ENCODE measurements at regions of chr3 and their contacts with region 1.

Region 1: DNA sequence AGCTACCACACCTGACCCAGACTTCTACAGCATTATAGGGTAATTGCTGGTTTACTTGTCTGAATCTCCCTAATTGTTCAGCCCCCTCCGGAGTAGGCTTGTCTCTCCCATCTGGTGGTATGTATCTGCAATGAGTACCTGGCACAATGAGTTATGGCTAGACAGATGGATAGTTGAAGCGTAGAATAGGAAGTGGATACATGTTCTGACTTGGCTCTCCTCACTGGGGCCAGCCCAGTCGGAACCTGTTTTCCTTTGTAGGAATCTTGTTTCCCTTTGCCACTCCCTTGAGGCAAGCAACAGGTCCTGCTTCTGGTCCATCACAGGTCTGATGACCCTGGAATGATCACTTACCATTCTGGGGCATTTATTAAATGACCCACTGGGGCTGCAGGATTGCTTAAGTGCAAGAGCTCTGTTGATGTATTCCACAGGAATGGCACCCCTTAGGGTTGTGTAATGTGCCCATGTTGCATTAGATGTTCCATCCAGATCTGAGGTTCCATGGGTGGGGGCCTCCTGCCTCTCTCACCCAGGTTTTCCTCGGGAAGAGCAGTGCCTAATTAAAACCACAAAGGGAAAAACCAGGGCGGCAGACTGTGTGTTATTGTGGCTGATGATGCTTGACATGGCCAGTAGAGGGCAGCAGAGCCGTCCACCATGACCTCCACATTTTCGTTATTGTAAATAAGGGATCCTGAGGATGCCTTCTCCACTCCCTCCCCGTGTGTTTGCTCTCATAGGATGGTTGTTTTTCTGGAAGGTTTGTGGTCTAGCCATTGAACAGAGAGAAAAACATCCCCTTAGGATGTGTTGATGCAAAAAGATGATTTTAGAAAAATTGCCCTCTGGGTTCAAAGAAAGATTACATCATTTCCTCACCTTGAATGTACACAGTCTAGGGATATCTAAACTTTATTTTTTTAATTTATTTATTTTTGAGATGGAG is 58.0 kb downstream of the CMTM8 start:
- DNase-seq: peak; percentile 61 to 73 (median 68)
- H3K4me3 ChIP-seq: no peak overlapping the region
- H3K4me3 Mint-ChIP-seq: peak overlapping the region; percentile 49 to 86 (median 71)
- H3K27ac ChIP-seq: peak overlapping the region; percentile 63
- H3K27ac Mint-ChIP-seq: peak overlapping the region; percentile 81 to 97 (median 93)
- H3K4me1 ChIP-seq: peaks cover 52% of the 10 kb centered on the region
- H3K4me1 Mint-ChIP-seq: peaks cover 34 to 65% (median 48%) of the 10 kb centered on the region in 4 donors
- H3K27me3 ChIP-seq: no peaks in the 10 kb centered on the region
- H3K27me3 Mint-ChIP-seq: no peaks in the 10 kb centered on the region

Region 2: GRCh38 chr3:32238453-32239306 is 57.9 kb before region 1 on chr3 and contains the start of gene CMTM8:
- CTCF ChIA-PET with region 1: interaction called, 57 read pairs
- POLR2A ChIA-PET with region 1: interaction called, 10 read pairs
- intact Hi-C with region 1: no loop called
- DNase-seq: peak; percentile 65 to 72 (median 67)
- H3K4me3 ChIP-seq: peak within 1 kb of the TSS; percentile 58 to 63
- H3K4me3 Mint-ChIP-seq: peak within 1 kb of the TSS; percentile 87 to 93 (median 90)
- H3K27ac ChIP-seq: peak within 1 kb of the TSS; percentile 57
- H3K27ac Mint-ChIP-seq: peak within 1 kb of the TSS; percentile 41 to 91 (median 66)
- H3K4me1 ChIP-seq: peaks cover 35% of the 10 kb centered on the region
- H3K4me1 Mint-ChIP-seq: peaks cover 28 to 50% (median 41%) of the 10 kb centered on the region in 4 donors
- H3K27me3 ChIP-seq: no peaks in the 10 kb centered on the region
- H3K27me3 Mint-ChIP-seq: no peaks in the 10 kb centered on the region
- total RNA-seq, gene CMTM8: 16.8 to 17.8 TPM

Region 3: DNA sequence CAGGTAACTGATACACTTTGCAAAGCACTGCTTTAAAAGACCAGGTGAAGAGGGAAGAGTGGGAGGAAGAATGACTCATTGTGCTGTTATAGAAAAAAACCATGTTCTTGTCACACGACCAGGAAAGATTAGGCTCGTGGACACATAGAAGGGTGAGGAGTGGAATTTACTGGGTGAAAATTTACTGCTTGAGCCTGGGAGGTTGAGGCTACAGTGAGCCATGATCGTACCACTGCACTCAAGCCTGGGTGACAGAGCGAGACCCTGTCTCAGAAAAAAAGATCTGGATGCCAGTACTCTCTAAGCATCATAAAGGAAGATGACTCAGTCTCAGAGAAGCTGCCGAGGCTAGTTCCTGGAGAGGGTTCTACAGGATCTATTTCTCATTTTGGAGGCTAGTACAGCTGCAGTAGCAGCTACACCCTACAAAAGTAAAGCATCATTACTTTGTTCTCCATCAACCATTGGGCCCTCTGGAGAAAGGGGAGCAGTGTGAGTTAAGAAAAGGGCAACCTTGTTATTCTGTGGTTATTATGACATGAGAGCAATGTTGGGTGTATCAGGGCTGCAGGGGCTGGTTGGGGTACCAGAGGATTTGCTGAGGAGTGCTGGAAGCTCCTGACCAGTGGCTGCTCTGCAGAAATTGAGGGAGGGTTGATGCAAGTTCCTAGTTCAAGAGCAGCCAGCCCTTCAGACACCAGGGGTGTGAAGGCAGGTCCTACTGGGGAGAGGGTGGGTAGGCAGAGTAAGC is 17.4 kb after region 1 on chr3:
- CTCF ChIA-PET with region 1: interaction called, 77 read pairs
- POLR2A ChIA-PET with region 1: interaction called, 50 read pairs
- intact Hi-C with region 1: loop called (anchors 2 kb)
- DNase-seq: peak in 1 of 5 donors; percentile 47
- H3K4me3 ChIP-seq: no peak overlapping the region
- H3K4me3 Mint-ChIP-seq: peak overlapping the region; percentile 15 to 81 (median 51)
- H3K27ac ChIP-seq: peak overlapping the region; percentile 19
- H3K27ac Mint-ChIP-seq: peak overlapping the region; percentile 75 to 94 (median 86)
- H3K4me1 ChIP-seq: peaks cover 23% of the 10 kb centered on the region
- H3K4me1 Mint-ChIP-seq: peaks cover 24 to 40% (median 31%) of the 10 kb centered on the region in 4 donors
- H3K27me3 ChIP-seq: no peaks in the 10 kb centered on the region
- H3K27me3 Mint-ChIP-seq: no peaks in the 10 kb centered on the region

Region 4: GRCh38 chr3:32340039-32340438 is 43.5 kb after region 1 on chr3:
- CTCF ChIA-PET with region 1: interaction called, 382 read pairs
- POLR2A ChIA-PET with region 1: interaction called, 81 read pairs
- intact Hi-C with region 1: loop called (anchors 1 kb)
- DNase-seq: peak; percentile 41 to 55 (median 49)
- H3K4me3 ChIP-seq: no peak overlapping the region
- H3K4me3 Mint-ChIP-seq: no peak overlapping the region
- H3K27ac ChIP-seq: no peak overlapping the region
- H3K27ac Mint-ChIP-seq: no peak overlapping the region
- H3K4me1 ChIP-seq: peaks cover 24% of the 10 kb centered on the region
- H3K4me1 Mint-ChIP-seq: peaks cover 21 to 27% (median 24%) of the 10 kb centered on the region in 4 donors
- H3K27me3 ChIP-seq: no peaks in the 10 kb centered on the region
- H3K27me3 Mint-ChIP-seq: no peaks in the 10 kb centered on the region

Region 5: GRCh38 chr3:32391643-32392535 is 95.4 kb after region 1 on chr3 and contains the start of gene CMTM7:
- CTCF ChIA-PET with region 1: interaction called, 14 read pairs
- POLR2A ChIA-PET with region 1: interaction called, 10 read pairs
- intact Hi-C with region 1: no loop called
- DNase-seq: peak; percentile 57 to 81 (median 67)
- H3K4me3 ChIP-seq: peak within 1 kb of the TSS; percentile 63 to 75
- H3K4me3 Mint-ChIP-seq: peak within 1 kb of the TSS; percentile 95 to 99 (median 97)
- H3K27ac ChIP-seq: peak within 1 kb of the TSS; percentile 76
- H3K27ac Mint-ChIP-seq: peak within 1 kb of the TSS; percentile 95 to 98 (median 97)
- H3K4me1 ChIP-seq: peaks cover 57% of the 10 kb centered on the region
- H3K4me1 Mint-ChIP-seq: peaks cover 36 to 64% (median 46%) of the 10 kb centered on the region in 4 donors
- H3K27me3 ChIP-seq: no peaks in the 10 kb centered on the region
- H3K27me3 Mint-ChIP-seq: no peaks in the 10 kb centered on the region
- total RNA-seq, gene CMTM7: 44.2 to 48.0 TPM